ENCODE measurements at regions of chr4 and their contacts with region 1.

Region 1: DNA sequence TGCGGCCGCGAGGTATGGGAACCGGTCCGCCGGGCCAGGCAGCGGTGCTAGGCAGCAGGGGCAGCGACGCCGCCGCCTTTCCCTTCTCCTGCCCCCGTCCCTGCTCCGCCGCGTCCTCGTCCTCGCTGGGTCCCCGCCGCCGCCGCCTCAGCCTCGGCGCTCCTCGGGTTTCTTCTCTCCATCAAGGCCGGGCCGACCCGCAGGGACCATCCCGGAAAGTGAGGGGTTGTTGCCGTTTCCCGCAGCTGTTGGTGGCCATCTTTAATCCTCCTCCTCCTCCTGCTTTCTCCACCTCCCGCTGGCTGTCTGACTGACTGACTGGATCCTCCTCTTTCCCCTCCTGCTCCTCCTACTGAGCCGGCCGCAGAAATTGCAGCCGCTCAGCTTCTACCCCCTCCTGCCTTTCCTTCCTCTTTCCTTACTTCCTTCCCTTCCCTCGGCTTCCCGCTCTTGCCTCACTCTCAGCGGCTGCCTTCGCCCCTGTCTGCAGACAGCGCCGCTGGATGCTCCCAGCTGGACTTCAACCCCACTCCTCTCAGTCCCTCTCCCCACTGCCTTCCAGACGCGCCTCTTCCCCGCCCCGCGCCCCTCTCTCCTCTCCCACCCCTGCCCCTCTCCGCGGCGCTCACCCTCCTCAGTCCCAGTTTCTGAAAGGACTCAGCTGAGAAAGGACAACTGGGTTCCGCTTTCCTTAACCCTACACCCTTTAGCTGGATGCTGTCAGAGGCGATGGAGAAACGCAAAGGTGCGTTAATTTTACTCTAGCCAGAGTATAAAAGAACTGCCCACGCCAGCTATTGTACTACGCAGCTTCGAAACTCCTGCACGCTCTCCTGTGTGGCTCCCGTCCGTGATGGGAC is at the start of gene WDFY3:
- DNase-seq: peak; percentile 94
- H3K4me3 ChIP-seq: peak within 1 kb of the TSS; percentile 93 to 96 (median 94)
- H3K27ac ChIP-seq: peak within 1 kb of the TSS; percentile 86 to 97 (median 92)
- H3K4me1 ChIP-seq: peaks cover 0 to 39% (median 22%) of the 10 kb centered on the region in 4 donors
- H3K27me3 ChIP-seq: no peaks in the 10 kb centered on the region
- CTCF ChIP-seq: peak in 1 of 4 experiments; percentile 9
- EP300 ChIP-seq: no peak
- POLR2A ChIP-seq: peak; percentile 45 to 47
- total RNA-seq, gene WDFY3: 50.5 to 85.7 (median 75.1) TPM

Region 2: GRCh38 chr4:84750253-84750959 is 216.2 kb before region 1 on chr4:
- intact Hi-C with region 1: loop called (anchors 2 kb)
- DNase-seq: no peak
- H3K4me3 ChIP-seq: no peak overlapping the region
- H3K27ac ChIP-seq: no peak overlapping the region
- H3K4me1 ChIP-seq: no peaks in the 10 kb centered on the region
- H3K27me3 ChIP-seq: no peaks in the 10 kb centered on the region
- CTCF ChIP-seq: peak; percentile 29 to 62 (median 33)
- EP300 ChIP-seq: no peak
- POLR2A ChIP-seq: no peak

Region 3: GRCh38 chr4:84852081-84852480 is 114.5 kb before region 1 on chr4:
- intact Hi-C with region 1: loop called (anchors 10 kb)
- DNase-seq: no peak
- H3K4me3 ChIP-seq: no peak overlapping the region
- H3K27ac ChIP-seq: no peak overlapping the region
- H3K4me1 ChIP-seq: peaks cover 0 to 17% (median 6%) of the 10 kb centered on the region in 4 donors
- H3K27me3 ChIP-seq: no peaks in the 10 kb centered on the region
- CTCF ChIP-seq: no peak
- EP300 ChIP-seq: no peak
- POLR2A ChIP-seq: no peak

Region 4: DNA sequence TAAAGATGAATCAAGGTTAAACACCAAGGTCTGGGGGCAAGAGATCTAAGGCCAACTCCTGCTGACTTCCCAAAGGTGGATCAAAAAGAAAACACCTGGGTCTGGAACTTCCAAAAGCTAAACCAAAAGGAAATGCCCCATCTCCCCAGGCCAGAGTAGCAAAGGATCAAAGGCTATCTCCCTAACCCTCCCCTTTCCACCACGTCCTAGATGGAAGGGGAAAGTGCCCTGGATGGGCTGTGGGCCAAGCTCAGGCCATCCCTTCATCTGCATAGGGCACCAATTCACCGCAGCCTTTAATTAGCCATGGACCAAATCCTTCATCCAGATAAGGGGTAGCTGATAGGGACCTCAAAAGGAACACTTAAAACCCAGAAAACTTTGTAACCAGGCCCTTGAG is 100.3 kb before region 1 on chr4:
- intact Hi-C with region 1: no loop called
- DNase-seq: no peak
- H3K4me3 ChIP-seq: no peak overlapping the region
- H3K27ac ChIP-seq: no peak overlapping the region
- H3K4me1 ChIP-seq: peaks cover 0 to 5% (median 0%) of the 10 kb centered on the region in 4 donors
- H3K27me3 ChIP-seq: no peaks in the 10 kb centered on the region
- CTCF ChIP-seq: no peak
- EP300 ChIP-seq: no peak
- POLR2A ChIP-seq: no peak